WTC11 (cell line): ENCODE measurements at regions of chr19 and their contacts with region 1.

Region 1: GRCh38 chr19:48999481-49000325 is 6.0 kb downstream of the RUVBL2 start:
- DNase-seq: peak; percentile 89
- ATAC-seq: peak; percentile 90
- H3K4me3 Mint-ChIP-seq: no peak overlapping the region; the same call in 1 of the 2 replicates
- H3K27ac Mint-ChIP-seq: peak overlapping the region; percentile 88
- H3K4me1 Mint-ChIP-seq: peaks cover 14% of the 10 kb centered on the region
- H3K27me3 Mint-ChIP-seq: no peaks in the 10 kb centered on the region
- CTCF ChIP-seq: peak; percentile 48; the same call in 1 of the 2 replicates

Region 2: DNA sequence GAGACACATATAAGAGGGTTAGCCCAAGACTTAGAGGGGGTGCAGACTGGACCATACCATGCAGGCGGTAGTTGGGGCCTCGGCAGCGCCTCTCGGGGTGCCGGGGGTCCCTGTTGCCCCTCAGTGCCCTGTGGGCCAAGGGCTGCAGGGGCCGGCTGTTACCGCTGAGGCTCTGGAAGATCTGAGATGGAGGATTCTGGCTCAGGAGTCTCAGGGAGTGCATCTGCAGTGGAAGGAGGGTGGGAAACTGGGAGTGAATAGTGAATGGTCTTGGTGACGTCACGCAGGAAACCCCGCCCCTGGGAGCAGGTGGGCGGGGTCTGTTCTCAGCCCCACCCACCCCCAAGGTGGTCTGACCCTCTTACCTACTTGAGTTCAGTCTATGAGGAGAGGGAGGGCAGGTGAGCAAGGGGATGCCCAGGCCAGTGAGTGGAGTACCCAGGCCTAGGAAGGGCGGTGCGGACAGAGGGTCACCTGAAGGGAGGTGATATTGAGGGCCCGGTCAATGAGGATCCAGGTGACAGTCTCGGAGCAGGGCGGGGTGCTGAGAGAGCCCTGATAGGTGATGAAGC is 360.8 kb before region 1 on chr19:
- CTCF ChIA-PET with region 1: no interaction called
- POLR2A ChIA-PET with region 1: no interaction called
- DNase-seq: peak; percentile 68
- ATAC-seq: no peak
- H3K4me3 Mint-ChIP-seq: peak overlapping the region; percentile 81
- H3K27ac Mint-ChIP-seq: peak overlapping the region; percentile 95
- H3K4me1 Mint-ChIP-seq: peaks cover 34% of the 10 kb centered on the region
- H3K27me3 Mint-ChIP-seq: peaks cover 15% of the 10 kb centered on the region
- CTCF ChIP-seq: no peak

Region 3: DNA sequence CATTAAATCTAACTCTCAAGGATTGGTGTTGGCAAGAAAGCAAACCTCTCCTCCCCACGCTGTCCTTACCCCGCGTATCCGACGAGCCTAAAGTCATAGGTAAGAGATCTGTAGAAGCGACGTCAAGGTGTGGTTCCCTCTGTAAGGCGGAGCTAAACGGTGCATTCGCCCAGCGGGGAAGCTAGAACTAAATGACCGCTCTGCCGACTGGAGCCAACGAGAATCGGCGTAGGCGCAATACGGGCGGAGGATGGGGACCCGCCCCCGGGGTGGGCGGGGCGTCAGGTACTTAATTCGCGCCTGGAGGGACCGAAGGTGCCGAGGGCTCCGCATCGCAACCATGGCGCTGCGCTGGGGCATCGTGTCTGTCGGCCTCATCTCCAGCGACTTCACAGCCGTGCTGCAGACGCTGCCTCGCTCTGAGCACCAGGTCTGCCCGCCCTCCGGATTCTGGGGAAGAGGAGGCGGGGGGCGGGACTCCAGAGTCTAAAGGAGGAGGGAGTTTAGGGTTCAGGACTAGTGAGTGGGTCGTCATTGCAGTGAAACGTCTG is 66.2 kb before region 1 on chr19 and contains the start of gene DHDH:
- CTCF ChIA-PET with region 1: interaction called, 10 read pairs
- POLR2A ChIA-PET with region 1: no interaction called
- DNase-seq: peak; percentile 98
- ATAC-seq: peak; percentile 94
- H3K4me3 Mint-ChIP-seq: peak within 1 kb of the TSS; percentile 87
- H3K27ac Mint-ChIP-seq: peak within 1 kb of the TSS; percentile 34
- H3K4me1 Mint-ChIP-seq: peaks cover 17% of the 10 kb centered on the region
- H3K27me3 Mint-ChIP-seq: peaks cover 53% of the 10 kb centered on the region
- CTCF ChIP-seq: no peak
- total RNA-seq, gene DHDH: 3.0 to 3.4 TPM (median 3.1 TPM) in 3 replicates

Region 4: DNA sequence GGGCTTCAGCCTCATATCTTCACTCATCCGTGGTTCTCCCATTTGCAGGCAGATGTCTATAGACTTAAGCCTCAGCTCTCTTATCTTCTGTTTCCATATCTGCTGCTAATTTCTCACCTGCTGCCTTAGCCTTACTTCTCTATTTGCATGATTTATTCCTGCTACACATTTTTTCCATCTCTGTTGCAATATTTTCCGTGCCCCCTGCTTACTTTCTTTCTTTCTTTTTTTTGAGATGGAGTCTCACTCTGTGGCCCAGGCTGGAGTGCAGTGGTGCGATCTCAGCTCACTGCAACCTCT is 12.3 kb before region 1 on chr19:
- CTCF ChIA-PET with region 1: interaction called, 16 read pairs
- POLR2A ChIA-PET with region 1: no interaction called
- DNase-seq: no peak
- ATAC-seq: no peak
- H3K4me3 Mint-ChIP-seq: no peak overlapping the region
- H3K27ac Mint-ChIP-seq: no peak overlapping the region; the same call in 1 of the 2 replicates
- H3K4me1 Mint-ChIP-seq: peaks cover 18% of the 10 kb centered on the region
- H3K27me3 Mint-ChIP-seq: no peaks in the 10 kb centered on the region
- CTCF ChIP-seq: no peak

Region 5: GRCh38 chr19:49056010-49056901 is 56.6 kb after region 1 on chr19:
- CTCF ChIA-PET with region 1: interaction called, 29 read pairs
- POLR2A ChIA-PET with region 1: no interaction called
- DNase-seq: peak; percentile 76
- ATAC-seq: peak; percentile 82
- H3K4me3 Mint-ChIP-seq: peak overlapping the region; percentile 71
- H3K27ac Mint-ChIP-seq: no peak overlapping the region
- H3K4me1 Mint-ChIP-seq: peaks cover 14% of the 10 kb centered on the region
- H3K27me3 Mint-ChIP-seq: peaks cover 75% of the 10 kb centered on the region
- CTCF ChIP-seq: peak; percentile 19; the same call in 1 of the 2 replicates

Region 6: DNA sequence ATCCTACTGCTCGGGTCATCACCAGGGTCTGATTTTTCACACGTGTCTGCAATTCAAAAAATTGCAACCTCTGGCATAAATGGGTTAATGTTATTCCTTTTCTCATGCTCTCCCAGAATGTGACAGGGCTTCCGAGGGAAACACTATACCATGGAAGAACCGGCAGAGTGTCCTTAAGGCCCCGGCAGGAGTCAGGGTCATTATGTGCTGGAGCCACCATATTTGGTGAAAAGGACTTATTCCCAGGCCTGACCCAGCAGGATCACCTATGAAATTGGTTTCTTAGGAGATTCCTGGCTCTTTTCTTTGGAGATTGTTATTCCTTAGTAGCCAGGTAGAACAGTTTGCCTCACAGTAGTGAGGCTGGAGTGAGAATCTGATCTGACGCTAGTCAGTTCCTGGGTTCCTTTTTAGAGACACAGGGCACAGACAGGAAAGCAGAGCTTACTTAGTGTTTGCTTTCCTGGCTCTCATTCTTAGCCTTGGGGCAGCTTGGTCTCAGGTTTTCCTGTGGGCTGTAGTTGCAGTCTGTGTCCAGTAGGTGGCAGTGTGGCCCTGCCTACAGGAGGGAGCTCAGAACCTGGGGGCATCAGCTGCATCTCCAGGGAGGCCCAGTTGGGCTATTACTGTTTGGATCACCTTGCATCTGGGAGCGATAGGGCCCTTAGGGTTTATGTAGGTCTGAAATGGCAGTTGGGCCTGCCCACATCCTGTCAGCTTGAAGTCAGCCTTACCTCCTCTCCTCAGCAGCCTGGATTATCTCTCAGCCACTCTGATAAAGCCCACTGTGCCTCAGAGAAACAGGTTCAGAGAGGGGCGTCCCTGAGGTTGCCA is 98.0 kb after region 1 on chr19:
- CTCF ChIA-PET with region 1: interaction called, 17 read pairs
- POLR2A ChIA-PET with region 1: no interaction called
- DNase-seq: peak; percentile 82
- ATAC-seq: peak; percentile 89
- H3K4me3 Mint-ChIP-seq: no peak overlapping the region
- H3K27ac Mint-ChIP-seq: peak overlapping the region; percentile 85
- H3K4me1 Mint-ChIP-seq: peaks cover 13% of the 10 kb centered on the region
- H3K27me3 Mint-ChIP-seq: no peaks in the 10 kb centered on the region
- CTCF ChIP-seq: peak; percentile 98

Region 7: DNA sequence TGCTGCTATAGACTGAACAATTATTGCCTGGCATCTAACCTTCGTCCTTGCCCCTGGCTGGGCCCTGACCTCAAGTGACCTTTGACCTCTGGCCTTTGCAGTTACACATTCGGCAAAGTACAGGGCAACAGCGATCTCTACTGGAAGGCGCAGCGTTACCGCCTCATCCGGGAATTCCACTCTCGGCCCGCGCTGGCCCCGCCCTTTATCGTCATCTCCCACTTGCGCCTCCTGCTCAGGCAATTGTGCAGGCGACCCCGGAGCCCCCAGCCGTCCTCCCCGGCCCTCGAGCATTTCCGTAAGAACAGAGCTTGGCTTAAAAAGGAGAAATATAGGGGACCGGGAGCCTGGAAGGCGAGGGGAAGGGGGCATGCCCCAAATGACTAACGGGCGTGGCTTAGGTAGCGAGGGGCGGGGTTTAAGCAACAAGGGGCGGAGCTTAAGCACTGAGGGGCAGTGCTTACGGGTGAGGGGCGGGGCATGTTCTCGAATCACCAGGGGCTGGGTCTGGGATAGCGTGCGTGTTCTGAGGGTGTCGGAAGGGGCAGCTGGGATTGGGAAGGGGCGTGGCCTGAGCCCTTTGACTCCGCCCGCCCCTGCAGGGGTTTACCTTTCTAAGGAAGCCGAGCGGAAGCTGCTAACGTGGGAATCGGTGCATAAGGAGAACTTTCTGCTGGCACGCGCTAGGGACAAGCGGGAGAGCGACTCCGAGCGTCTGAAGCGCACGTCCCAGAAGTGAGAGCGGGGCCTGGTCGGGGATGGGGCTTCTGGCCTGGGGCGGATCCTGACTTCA is 210.6 kb after region 1 on chr19:
- CTCF ChIA-PET with region 1: interaction called, 17 read pairs
- POLR2A ChIA-PET with region 1: no interaction called
- DNase-seq: peak; percentile 96
- ATAC-seq: peak; percentile 97
- H3K4me3 Mint-ChIP-seq: peak overlapping the region; percentile 75
- H3K27ac Mint-ChIP-seq: peak overlapping the region; percentile 92
- H3K4me1 Mint-ChIP-seq: peaks cover 7% of the 10 kb centered on the region
- H3K27me3 Mint-ChIP-seq: peaks cover 2% of the 10 kb centered on the region; the same call in 1 of the 2 replicates
- CTCF ChIP-seq: no peak